ENCODE measurements at regions of chr12 and their contacts with region 1.

Region 1: GRCh38 chr12:8032242-8033152 is at the start of gene FOXJ2:
- DNase-seq: peak in 1 of 2 donors; percentile 89
- H3K4me3 ChIP-seq: peak within 1 kb of the TSS; percentile 81 to 83
- H3K27ac ChIP-seq: peak within 1 kb of the TSS; percentile 97 to 99
- H3K4me1 ChIP-seq: peaks cover 14 to 21% of the 10 kb centered on the region in 2 donors
- H3K27me3 ChIP-seq: no peaks in the 10 kb centered on the region
- CTCF ChIP-seq: no peak
- total RNA-seq, gene FOXJ2: 17.1 TPM

Region 2: DNA sequence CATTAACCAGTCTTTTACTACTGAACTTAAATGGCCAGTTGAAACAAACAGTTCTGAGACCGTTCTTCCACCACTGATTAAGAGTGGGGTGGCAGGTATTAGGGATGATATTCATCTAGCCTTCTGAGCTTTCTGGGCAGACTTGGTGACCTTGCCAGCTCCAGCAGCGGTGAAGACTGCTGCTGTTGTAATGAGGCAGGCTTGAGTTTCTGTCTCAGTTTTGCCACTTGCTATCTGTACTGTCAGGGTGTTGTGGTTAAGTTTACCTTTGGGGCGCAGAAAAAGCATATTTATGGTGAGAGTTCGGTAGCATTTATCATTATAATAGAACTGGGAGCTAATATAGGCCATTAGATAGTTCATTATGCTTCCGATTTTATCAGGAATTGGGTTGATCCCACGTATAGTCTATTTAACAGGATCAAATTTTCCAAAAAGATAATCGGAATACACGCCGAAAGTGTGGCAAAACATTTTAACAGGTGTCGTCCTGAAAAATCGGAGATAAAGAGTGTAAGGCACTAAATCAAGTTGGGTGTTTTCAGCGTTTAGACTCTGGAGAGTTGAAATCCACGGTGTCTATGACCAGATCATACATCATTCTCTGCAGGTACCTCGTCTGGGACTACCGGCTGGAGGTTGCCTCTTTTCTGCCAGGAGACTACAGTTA is 48.9 kb after region 1 on chr12:
- intact Hi-C with region 1: loop called (anchors 2 kb)
- DNase-seq: no peak
- H3K4me3 ChIP-seq: peak overlapping the region; percentile 68 to 75
- H3K27ac ChIP-seq: peak overlapping the region; percentile 77 to 92
- H3K4me1 ChIP-seq: peaks cover 0 to 24% of the 10 kb centered on the region in 2 donors
- H3K27me3 ChIP-seq: no peaks in the 10 kb centered on the region
- CTCF ChIP-seq: no peak

Region 3: GRCh38 chr12:9118158-9118557 is 1085.7 kb after region 1 on chr12:
- intact Hi-C with region 1: loop called (anchors 10 kb)
- DNase-seq: peak; percentile 30 to 70
- H3K4me3 ChIP-seq: peak overlapping the region; percentile 34 to 69
- H3K27ac ChIP-seq: peak overlapping the region; percentile 80 to 85
- H3K4me1 ChIP-seq: peaks cover 3 to 32% of the 10 kb centered on the region in 2 donors
- H3K27me3 ChIP-seq: no peaks in the 10 kb centered on the region
- CTCF ChIP-seq: no peak